ENCODE measurements at regions of chr3 and their contacts with region 1.

Region 1: GRCh38 chr3:98817547-98818041 is 54.5 kb downstream of the ST3GAL6 start:
- DNase-seq: no peak
- H3K4me3 ChIP-seq: no peak overlapping the region
- H3K27ac ChIP-seq: no peak overlapping the region
- H3K4me1 ChIP-seq: no peaks in the 10 kb centered on the region
- H3K27me3 ChIP-seq: no peaks in the 10 kb centered on the region
- CTCF ChIP-seq: peak; percentile 79

Region 2: DNA sequence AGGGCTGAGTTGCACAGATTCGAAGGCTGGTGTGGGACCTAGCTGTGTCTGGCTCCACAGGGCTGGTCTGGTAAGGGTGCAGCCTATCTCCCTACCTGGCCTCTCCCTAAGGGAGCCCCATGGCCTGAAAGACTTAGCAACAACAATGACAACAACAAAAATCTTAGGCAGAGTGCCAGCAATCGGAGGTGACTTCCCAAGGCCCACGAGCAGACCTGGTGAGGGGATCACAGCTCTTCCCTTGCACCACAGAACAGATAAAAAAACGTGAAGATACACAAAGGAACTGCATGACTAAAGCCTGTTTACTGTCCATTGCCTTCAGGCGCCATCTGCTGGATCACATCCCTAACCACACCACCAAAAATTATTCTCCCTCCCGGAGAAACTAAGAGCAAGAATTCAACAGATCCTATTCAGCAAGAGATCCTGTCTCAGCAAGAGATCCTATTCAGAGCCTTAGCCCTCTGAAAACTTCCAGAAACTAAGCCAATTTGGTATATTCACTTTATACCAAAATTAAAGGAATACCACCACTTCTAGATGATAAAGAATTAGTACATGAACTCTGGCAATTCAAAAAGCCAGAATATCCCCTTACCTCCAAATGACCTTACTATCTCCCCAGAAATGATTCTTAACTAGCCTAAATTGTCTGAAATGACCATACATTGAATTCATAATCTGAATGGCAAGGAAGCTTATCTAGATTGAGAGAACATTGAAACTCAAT is 488.0 kb before region 1 on chr3:
- intact Hi-C with region 1: loop called (anchors 10 kb)
- DNase-seq: peak; percentile 20
- H3K4me3 ChIP-seq: no peak overlapping the region
- H3K27ac ChIP-seq: no peak overlapping the region
- H3K4me1 ChIP-seq: no peaks in the 10 kb centered on the region
- H3K27me3 ChIP-seq: no peaks in the 10 kb centered on the region
- CTCF ChIP-seq: peak; percentile 23

Region 3: DNA sequence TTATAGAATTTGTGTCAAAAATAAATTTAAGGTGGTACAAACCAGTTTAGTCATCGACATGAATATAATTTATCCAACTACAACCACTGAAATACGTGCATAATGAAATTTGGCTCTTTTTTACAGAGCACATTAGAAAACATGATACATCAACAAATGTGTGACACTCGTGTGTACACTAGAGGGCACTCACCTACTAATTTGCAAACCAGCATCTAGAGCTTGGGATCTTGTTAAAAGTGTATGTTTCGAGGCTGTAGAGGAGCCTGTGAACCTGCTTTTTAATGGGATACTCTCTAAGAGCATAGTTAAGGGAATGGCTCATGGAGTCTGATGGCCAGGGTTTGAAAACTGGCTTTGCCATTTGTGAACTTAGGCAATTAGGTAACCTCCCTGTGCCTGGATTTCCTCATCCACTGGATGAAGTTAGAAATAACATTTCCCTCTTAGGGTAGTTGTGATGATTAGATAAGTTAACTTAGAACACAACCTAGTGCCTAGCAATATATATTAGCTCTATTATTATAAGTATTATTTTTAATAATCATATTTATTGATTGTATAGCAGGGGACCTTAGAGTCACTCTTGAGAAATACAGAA is 215.4 kb before region 1 on chr3:
- intact Hi-C with region 1: loop called (anchors 5 kb)
- DNase-seq: no peak
- H3K4me3 ChIP-seq: no peak overlapping the region
- H3K27ac ChIP-seq: no peak overlapping the region
- H3K4me1 ChIP-seq: no peaks in the 10 kb centered on the region
- H3K27me3 ChIP-seq: no peaks in the 10 kb centered on the region
- CTCF ChIP-seq: peak; percentile 58

Region 4: GRCh38 chr3:98994128-98994762 is 176.7 kb after region 1 on chr3:
- intact Hi-C with region 1: loop called (anchors 2 kb)
- DNase-seq: no peak
- H3K4me3 ChIP-seq: no peak overlapping the region
- H3K27ac ChIP-seq: no peak overlapping the region
- H3K4me1 ChIP-seq: no peaks in the 10 kb centered on the region
- H3K27me3 ChIP-seq: no peaks in the 10 kb centered on the region
- CTCF ChIP-seq: peak; percentile 38

Region 5: GRCh38 chr3:99172736-99173657 is 355.4 kb after region 1 on chr3:
- intact Hi-C with region 1: loop called (anchors 5 kb)
- DNase-seq: peak; percentile 44
- H3K4me3 ChIP-seq: no peak overlapping the region
- H3K27ac ChIP-seq: no peak overlapping the region
- H3K4me1 ChIP-seq: no peaks in the 10 kb centered on the region
- H3K27me3 ChIP-seq: no peaks in the 10 kb centered on the region
- CTCF ChIP-seq: peak; percentile 42